ENCODE measurements at regions of chr9 and their contacts with region 1.

Region 1: GRCh38 chr9:136944519-136945279 is at the starts of genes C8G and FBXW5:
- DNase-seq: peak; percentile 91 to 92
- ATAC-seq: peak; percentile 67 to 68
- H3K4me3 ChIP-seq: peak within 1 kb of the TSS; percentile 79 to 96 (median 92)
- H3K27ac ChIP-seq: peak within 1 kb of the TSS; percentile 92 to 97 (median 96)
- H3K4me1 ChIP-seq: peaks cover 27 to 60% of the 10 kb centered on the region in 2 donors
- H3K27me3 ChIP-seq: no peaks in the 10 kb centered on the region
- CTCF ChIP-seq: peak; percentile 96 to 100 (median 99)
- POLR2A ChIP-seq: peak; percentile 97 to 98
- total RNA-seq, gene C8G: 1.7 to 5.2 TPM in 2 of 4 donors, not detected in the others
- total RNA-seq, gene FBXW5: 329 to 469 (median 435) TPM

Region 2: GRCh38 chr9:136686794-136687711 is 257.6 kb before region 1 on chr9 and contains the start of gene AGPAT2:
- in situ Hi-C with region 1: no loop called
- intact Hi-C with region 1: loop called (anchors 5 kb)
- DNase-seq: peak; percentile 79 to 80
- ATAC-seq: peak; percentile 40 to 55
- H3K4me3 ChIP-seq: peak within 1 kb of the TSS; percentile 81 to 98 (median 87)
- H3K27ac ChIP-seq: peak within 1 kb of the TSS; percentile 88 to 96 (median 94)
- H3K4me1 ChIP-seq: peaks cover 37 to 49% of the 10 kb centered on the region in 2 donors
- H3K27me3 ChIP-seq: no peaks in the 10 kb centered on the region
- CTCF ChIP-seq: peak in 1 of 5 experiments; percentile 17
- POLR2A ChIP-seq: peak; percentile 91 to 93
- total RNA-seq, gene AGPAT2: 19.0 to 77.4 (median 36.0) TPM

Region 3: GRCh38 chr9:136807281-136808074 is 137.2 kb before region 1 on chr9 and contains the start of gene RABL6:
- in situ Hi-C with region 1: no loop called
- intact Hi-C with region 1: loop called (anchors 1 kb)
- DNase-seq: peak; percentile 29 to 66
- ATAC-seq: peak; percentile 92 to 93
- H3K4me3 ChIP-seq: peak within 1 kb of the TSS; percentile 76 to 98 (median 92)
- H3K27ac ChIP-seq: peak within 1 kb of the TSS; percentile 82 to 94 (median 90)
- H3K4me1 ChIP-seq: peaks cover 31 to 35% of the 10 kb centered on the region in 2 donors
- H3K27me3 ChIP-seq: peaks cover 0 to under 1% (median 0%) of the 10 kb centered on the region in 3 donors
- CTCF ChIP-seq: no peak
- POLR2A ChIP-seq: peak; percentile 65 to 80
- total RNA-seq, gene RABL6: 84.9 to 121 (median 105) TPM

Region 4: DNA sequence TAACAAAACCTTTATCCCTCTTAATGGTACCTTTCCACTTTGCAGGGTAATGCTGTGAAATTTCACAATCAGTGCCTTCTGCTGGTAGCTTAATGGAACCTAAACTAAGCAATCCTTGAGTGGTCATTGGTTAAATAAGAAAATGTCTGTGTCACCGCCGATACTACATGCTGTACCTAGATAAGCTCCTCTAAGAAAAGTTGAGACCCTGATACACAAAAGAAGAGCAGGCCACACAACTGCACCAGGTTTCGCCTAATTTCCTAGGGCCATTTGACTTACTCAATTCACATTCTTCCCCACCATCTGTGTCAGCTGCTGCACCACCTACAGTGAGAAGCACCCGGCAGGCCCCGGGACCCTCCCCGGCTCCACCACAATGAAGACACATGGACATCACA is 69.5 kb before region 1 on chr9:
- in situ Hi-C with region 1: no loop called
- intact Hi-C with region 1: no loop called
- DNase-seq: no peak
- ATAC-seq: no peak
- H3K4me3 ChIP-seq: no peak overlapping the region
- H3K27ac ChIP-seq: no peak overlapping the region
- H3K4me1 ChIP-seq: no peaks in the 10 kb centered on the region
- H3K27me3 ChIP-seq: no peaks in the 10 kb centered on the region
- CTCF ChIP-seq: no peak
- POLR2A ChIP-seq: no peak

Region 5: GRCh38 chr9:136928591-136928990 is 16.1 kb before region 1 on chr9:
- in situ Hi-C with region 1: no loop called
- intact Hi-C with region 1: loop called (anchors 1 kb)
- DNase-seq: peak; percentile 75 to 89
- ATAC-seq: peak; percentile 82 to 95
- H3K4me3 ChIP-seq: peak overlapping the region in 3 of 4 donors; percentile 14 to 43 (median 36)
- H3K27ac ChIP-seq: peak overlapping the region; percentile 91 to 96 (median 96)
- H3K4me1 ChIP-seq: peaks cover 37 to 64% of the 10 kb centered on the region in 2 donors
- H3K27me3 ChIP-seq: no peaks in the 10 kb centered on the region
- CTCF ChIP-seq: peak; percentile 32 to 67 (median 50)
- POLR2A ChIP-seq: peak; percentile 86 to 88

Region 6: GRCh38 chr9:137034863-137035761 is 90.4 kb after region 1 on chr9:
- in situ Hi-C with region 1: loop called in 1 of 4 experiments (anchors 10 kb)
- intact Hi-C with region 1: no loop called
- DNase-seq: peak; percentile 55 to 66
- ATAC-seq: peak; percentile 73 to 93
- H3K4me3 ChIP-seq: no peak overlapping the region
- H3K27ac ChIP-seq: no peak overlapping the region
- H3K4me1 ChIP-seq: peaks cover 0 to 3% of the 10 kb centered on the region in 2 donors
- H3K27me3 ChIP-seq: peaks cover 0 to 6% (median 0%) of the 10 kb centered on the region in 3 donors
- CTCF ChIP-seq: peak; percentile 81 to 96 (median 91)
- POLR2A ChIP-seq: no peak